AG04449 (cell line): ENCODE measurements at regions of chr1 and their contacts with region 1.

Region 1: GRCh38 chr1:231407547-231408396 is 14.3 kb downstream of the EGLN1 start:
- DNase-seq: no peak
- H3K4me3 ChIP-seq: peak overlapping the region; percentile 15; the same call in 1 of the 2 replicates
- CTCF ChIP-seq: no peak

Region 2: GRCh38 chr1:231395076-231395995 is 12.4 kb before region 1 on chr1:
- CTCF ChIA-PET with region 1: no interaction called
- POLR2A ChIA-PET with region 1: no interaction called
- DNase-seq: peak; percentile 95
- H3K4me3 ChIP-seq: peak overlapping the region; percentile 9
- CTCF ChIP-seq: no peak

Region 3: GRCh38 chr1:231420959-231421742 is 13.4 kb after region 1 on chr1:
- CTCF ChIA-PET with region 1: interaction called, 10 read pairs
- POLR2A ChIA-PET with region 1: interaction called, 3 read pairs
- DNase-seq: no peak
- H3K4me3 ChIP-seq: peak overlapping the region; percentile 86
- CTCF ChIP-seq: no peak